Activated CD8-positive, alpha-beta T cell treated with anti-CD3 and anti-CD28 coated beads, Interleukin-2, amount 10 ng/mL, durations not matched to agents 7 days and 5 days (primary cell): ENCODE measurements at regions of chr10 and their contacts with region 1.

Region 1: DNA sequence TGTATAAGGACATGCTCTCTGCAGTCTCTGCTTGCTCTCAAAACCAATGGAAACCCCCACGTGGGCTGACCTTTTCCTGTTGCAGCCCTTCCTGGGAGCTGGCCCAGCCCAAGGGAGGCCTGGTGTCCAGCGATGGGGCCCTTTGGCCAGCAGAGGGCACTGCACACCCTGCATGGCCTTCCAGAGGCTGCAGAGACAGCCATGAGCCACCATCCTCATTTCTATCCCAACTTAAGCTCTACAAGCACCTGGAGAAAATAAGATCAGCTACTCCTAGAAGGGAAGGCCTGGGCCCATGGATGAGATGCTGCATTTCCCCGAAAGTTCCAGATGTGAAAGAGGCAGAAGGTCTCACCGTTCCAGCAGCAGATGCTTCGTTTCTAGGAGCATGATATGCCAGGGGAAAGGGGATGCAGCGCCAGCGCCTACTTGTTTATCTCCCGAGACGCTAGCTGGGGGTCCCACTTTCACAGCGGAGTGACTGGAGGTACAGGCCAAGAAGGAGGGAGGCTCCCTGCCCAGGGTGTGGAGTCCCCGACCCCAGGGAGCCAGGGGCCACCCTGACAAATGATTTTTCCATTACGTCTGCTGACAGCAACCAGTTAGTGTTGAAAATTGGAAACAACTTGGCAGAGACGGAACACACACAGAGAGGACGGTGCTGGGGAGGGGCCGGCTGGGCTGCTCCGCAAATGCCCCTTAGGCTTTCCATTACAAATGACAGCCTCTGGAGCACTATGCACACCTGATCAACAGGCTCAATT is 106.4 kb downstream of the ZRANB1 start:
- DNase-seq: peak; percentile 73
- ATAC-seq: peak; percentile 90
- H3K4me3 Mint-ChIP-seq: no peak overlapping the region
- H3K27ac Mint-ChIP-seq: no peak overlapping the region
- H3K4me1 Mint-ChIP-seq: no peaks in the 10 kb centered on the region
- H3K27me3 Mint-ChIP-seq: no peaks in the 10 kb centered on the region

Region 2: GRCh38 chr10:125006921-125007426 is 41.3 kb before region 1 on chr10:
- CTCF ChIA-PET with region 1: no interaction called
- POLR2A ChIA-PET with region 1: no interaction called
- DNase-seq: no peak
- ATAC-seq: no peak
- H3K4me3 Mint-ChIP-seq: no peak overlapping the region
- H3K27ac Mint-ChIP-seq: no peak overlapping the region
- H3K4me1 Mint-ChIP-seq: no peaks in the 10 kb centered on the region
- H3K27me3 Mint-ChIP-seq: peaks cover 15% of the 10 kb centered on the region

Region 3: DNA sequence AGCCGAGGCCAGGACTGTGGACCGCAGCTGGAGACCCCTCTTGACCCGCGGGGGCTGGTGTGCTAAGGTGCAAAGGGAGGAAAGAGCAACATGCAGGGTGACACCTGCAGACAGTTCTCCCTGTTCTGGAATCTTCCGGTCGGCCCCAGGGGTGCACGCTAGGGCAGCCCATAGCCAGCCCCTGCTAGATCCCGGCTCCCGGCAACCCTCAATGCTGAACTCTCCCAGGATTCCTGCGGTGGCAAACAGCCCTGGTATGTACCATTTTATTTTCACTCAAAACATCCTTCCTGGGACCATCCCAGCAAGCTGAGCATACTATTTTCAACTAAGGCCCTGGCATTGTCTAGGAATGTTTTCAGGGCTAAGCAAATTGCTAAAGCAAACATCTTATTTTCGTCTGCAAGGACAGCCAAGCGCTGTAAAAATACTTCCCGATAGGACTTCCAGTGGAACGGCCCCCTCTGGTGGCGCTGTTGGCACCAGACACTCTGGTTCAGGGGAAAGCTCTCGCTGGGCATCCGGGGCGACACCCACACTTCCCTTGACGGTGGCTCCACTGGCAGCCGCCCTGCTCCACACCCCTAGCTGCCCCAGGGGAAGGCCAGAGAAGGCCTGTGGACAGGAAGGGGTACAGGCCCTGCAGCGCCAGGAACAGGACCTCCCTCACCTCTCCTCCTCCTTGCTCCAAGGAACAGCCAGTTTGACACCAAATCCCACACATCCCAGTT is 12.7 kb after region 1 on chr10:
- CTCF ChIA-PET with region 1: interaction called, 13 read pairs
- POLR2A ChIA-PET with region 1: no interaction called
- DNase-seq: peak; percentile 55
- ATAC-seq: no peak
- H3K4me3 Mint-ChIP-seq: no peak overlapping the region
- H3K27ac Mint-ChIP-seq: no peak overlapping the region
- H3K4me1 Mint-ChIP-seq: peaks cover 17% of the 10 kb centered on the region
- H3K27me3 Mint-ChIP-seq: peaks cover 16% of the 10 kb centered on the region

Region 4: DNA sequence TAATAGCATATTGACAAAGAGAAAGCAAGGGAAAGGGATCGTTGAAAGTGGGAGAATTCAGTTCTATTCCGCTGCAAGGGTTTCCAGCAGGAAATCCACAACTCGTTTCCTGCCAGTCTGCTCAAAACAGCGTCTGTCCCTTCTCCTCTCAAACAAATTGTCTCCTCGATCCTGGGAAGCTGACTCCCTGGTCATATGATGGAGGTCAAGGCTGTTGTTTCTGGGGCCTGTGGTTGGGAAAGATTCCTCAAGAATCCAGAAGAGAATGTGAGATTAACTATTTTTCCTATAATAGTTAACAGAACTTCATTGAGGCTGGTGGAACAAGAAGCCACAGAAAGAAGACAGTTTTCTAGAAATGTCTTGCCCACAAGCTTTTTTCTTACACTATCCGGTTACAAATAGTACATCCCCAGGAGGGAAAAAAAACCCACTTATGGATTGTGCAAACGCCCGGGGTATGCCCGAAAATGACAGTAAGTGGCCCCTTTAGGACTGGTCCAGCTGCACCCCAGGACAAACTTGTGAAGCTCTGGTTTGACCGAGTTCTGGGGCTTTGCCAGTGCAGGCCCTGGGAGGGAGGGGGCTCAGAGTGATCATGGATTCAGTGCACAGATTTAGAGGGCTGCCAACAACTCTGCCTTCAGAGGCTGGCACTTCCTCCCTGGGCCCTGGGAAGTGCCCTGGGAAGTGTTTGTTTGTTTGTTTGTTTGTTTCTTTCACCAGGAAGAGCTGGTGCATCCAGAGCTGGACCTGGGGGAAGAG is 161.5 kb after region 1 on chr10:
- CTCF ChIA-PET with region 1: no interaction called
- POLR2A ChIA-PET with region 1: no interaction called
- DNase-seq: no peak
- ATAC-seq: no peak
- H3K4me3 Mint-ChIP-seq: no peak overlapping the region
- H3K27ac Mint-ChIP-seq: no peak overlapping the region
- H3K4me1 Mint-ChIP-seq: no peaks in the 10 kb centered on the region
- H3K27me3 Mint-ChIP-seq: no peaks in the 10 kb centered on the region